ENCODE measurements at regions of chr5 and their contacts with region 1.

Region 1: DNA sequence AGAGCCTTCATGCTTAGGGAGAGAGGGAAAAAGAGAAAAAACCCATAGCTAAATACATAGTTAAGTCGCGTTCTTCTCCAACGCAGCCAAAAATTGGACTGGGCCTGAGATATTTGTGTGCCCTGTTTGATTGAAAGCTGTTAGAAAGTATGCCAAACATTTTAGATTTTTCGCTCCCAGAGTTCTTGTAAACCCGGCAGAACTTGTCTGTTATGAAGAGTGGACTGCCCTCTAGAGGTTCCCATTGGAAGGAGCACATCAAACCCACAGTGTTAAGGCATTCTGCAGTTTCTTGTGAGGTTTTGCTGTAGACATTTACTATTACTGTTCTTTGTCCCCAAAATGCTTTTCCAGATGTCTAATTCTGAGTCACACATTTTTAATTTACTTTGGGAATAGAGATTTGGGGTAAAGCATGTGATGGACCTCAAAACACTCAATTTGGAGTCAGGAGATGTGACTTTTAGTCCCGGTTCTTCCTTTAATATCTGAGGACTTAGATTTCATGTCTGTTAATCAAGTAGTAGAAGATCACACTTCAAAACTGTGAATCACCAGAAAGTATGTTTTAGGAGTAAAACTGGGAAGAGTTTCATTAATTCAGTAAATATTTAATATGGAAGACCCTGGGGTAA is 96.6 kb downstream of the PCSK1 start:
- DNase-seq: peak; percentile 63 to 76
- H3K4me3 ChIP-seq: no peak overlapping the region
- H3K27ac ChIP-seq: peak overlapping the region; percentile 48
- H3K4me1 ChIP-seq: peaks cover 17% of the 10 kb centered on the region
- H3K27me3 ChIP-seq: no peaks in the 10 kb centered on the region
- CTCF ChIP-seq: peak; percentile 89

Region 2: DNA sequence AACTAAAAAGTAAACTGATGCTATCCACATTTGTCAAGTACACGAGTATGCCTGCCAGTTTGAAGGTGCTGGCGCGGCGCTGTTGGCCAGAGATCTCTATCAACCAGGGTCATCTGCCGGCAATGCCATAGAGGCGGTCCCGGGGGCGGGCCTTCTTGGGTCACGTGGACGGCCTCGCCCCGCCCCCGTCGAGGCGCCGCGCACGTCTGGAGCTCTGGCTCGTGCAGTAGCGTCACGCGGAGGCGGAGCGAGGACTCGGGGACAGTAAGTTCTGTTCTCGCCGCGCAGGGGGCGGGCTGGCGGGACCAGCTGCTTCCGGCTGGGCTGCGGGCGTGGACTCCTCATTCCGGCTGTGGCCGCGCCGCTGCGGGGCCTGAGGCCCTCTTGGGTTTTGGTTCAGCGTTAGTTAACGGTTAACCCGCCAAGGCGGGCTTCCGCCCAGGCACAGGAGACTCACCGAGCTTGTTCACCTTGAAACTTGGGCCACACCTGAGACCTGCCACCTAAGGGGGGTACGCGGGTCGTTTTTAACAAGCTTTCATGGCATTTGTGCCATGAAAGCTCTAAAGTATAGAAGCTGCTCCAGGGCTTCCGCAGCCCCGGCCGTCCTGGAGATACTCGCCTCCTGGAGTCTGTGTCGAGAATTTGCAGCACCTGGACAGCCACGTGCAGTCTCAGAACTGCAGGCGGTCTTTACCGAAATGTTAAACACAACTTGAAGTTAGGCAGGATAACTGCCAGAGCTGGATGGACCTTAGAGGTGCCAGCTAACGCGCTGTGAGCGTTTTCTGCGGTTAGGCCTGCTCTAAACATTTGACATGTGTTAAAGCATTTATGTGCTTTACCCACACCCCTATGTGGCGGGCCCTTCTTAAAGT is 689.7 kb before region 1 on chr5 and contains the start of gene RFESD:
- CTCF ChIA-PET with region 1: no interaction called
- POLR2A ChIA-PET with region 1: no interaction called
- intact Hi-C with region 1: loop called (anchors 5 kb)
- DNase-seq: peak; percentile 88 to 93
- H3K4me3 ChIP-seq: peak within 1 kb of the TSS; percentile 89
- H3K27ac ChIP-seq: peak within 1 kb of the TSS; percentile 75
- H3K4me1 ChIP-seq: peaks cover 16% of the 10 kb centered on the region
- H3K27me3 ChIP-seq: no peaks in the 10 kb centered on the region
- CTCF ChIP-seq: peak; percentile 36; the same call in 1 of the 2 replicates
- total RNA-seq, gene RFESD: 4.6 and 5.0 TPM in 2 replicates

Region 3: GRCh38 chr5:95794070-95794516 is 542.4 kb before region 1 on chr5:
- CTCF ChIA-PET with region 1: no interaction called
- POLR2A ChIA-PET with region 1: no interaction called
- intact Hi-C with region 1: no loop called
- DNase-seq: no peak
- H3K4me3 ChIP-seq: no peak overlapping the region
- H3K27ac ChIP-seq: no peak overlapping the region
- H3K4me1 ChIP-seq: no peaks in the 10 kb centered on the region
- H3K27me3 ChIP-seq: no peaks in the 10 kb centered on the region
- CTCF ChIP-seq: no peak

Region 4: GRCh38 chr5:95858661-95859326 is 477.7 kb before region 1 on chr5:
- CTCF ChIA-PET with region 1: no interaction called
- POLR2A ChIA-PET with region 1: no interaction called
- intact Hi-C with region 1: loop called (anchors 1 kb)
- DNase-seq: peak; percentile 89 to 97
- H3K4me3 ChIP-seq: peak overlapping the region; percentile 38
- H3K27ac ChIP-seq: peak overlapping the region; percentile 95
- H3K4me1 ChIP-seq: peaks cover 55% of the 10 kb centered on the region
- H3K27me3 ChIP-seq: no peaks in the 10 kb centered on the region
- CTCF ChIP-seq: peak; percentile 99

Region 5: DNA sequence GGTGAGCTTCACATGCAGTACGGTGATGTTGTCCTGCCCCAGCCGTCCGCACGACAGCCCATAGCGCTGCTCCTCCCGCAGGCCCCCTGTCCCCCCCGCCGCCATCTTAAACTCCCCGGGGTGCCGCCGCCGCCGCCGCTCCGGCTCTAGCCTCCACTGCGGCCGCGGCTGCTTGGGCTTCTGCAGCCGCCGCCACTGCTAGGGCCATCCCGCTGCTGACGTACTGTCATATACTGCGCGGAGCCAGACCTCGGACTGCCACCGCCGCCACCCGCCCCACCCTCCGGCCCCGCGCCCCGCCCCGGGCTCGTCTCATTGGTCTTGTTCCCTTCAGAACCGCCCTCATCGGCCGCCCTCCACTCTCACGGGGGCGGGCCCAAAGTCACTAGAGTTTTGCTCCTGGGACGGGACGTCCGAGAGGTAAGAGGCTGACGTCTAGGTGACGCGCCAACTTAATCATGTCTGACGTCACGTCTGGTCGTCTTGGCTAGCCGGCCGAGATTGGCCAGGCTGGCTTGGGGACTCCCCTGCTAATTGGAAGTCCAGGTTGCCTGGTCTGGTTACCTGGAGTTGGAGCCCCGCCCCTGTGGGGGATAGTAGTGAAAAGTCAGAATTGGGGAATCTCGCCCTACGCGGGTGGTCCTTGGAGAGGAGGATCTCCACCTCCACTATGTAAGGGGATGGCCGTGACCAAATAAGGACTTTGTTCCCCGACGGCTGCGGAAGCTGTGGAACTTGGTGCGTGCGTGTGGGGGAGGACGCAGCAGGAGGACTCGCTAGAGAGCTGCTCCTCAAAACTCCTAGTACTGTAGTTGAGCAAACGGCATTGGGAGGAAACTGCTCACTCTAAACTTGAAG is 374.6 kb before region 1 on chr5 and contains the start of gene ELL2:
- CTCF ChIA-PET with region 1: interaction called, 6 read pairs
- POLR2A ChIA-PET with region 1: no interaction called
- intact Hi-C with region 1: loop called (anchors 1 kb)
- DNase-seq: peak; percentile 98
- H3K4me3 ChIP-seq: peak within 1 kb of the TSS; percentile 65
- H3K27ac ChIP-seq: peak within 1 kb of the TSS; percentile 76
- H3K4me1 ChIP-seq: peaks cover 57% of the 10 kb centered on the region
- H3K27me3 ChIP-seq: no peaks in the 10 kb centered on the region
- CTCF ChIP-seq: no peak
- total RNA-seq, gene ELL2: 25.5 and 27.6 TPM in 2 replicates

Region 6: GRCh38 chr5:96067894-96068614 is 268.4 kb before region 1 on chr5:
- CTCF ChIA-PET with region 1: no interaction called
- POLR2A ChIA-PET with region 1: no interaction called
- intact Hi-C with region 1: loop called (anchors 5 kb)
- DNase-seq: peak; percentile 65 to 88
- H3K4me3 ChIP-seq: peak overlapping the region; percentile 22; the same call in 1 of the 2 replicates
- H3K27ac ChIP-seq: peak overlapping the region; percentile 63
- H3K4me1 ChIP-seq: peaks cover 46% of the 10 kb centered on the region
- H3K27me3 ChIP-seq: no peaks in the 10 kb centered on the region
- CTCF ChIP-seq: no peak

Region 7: DNA sequence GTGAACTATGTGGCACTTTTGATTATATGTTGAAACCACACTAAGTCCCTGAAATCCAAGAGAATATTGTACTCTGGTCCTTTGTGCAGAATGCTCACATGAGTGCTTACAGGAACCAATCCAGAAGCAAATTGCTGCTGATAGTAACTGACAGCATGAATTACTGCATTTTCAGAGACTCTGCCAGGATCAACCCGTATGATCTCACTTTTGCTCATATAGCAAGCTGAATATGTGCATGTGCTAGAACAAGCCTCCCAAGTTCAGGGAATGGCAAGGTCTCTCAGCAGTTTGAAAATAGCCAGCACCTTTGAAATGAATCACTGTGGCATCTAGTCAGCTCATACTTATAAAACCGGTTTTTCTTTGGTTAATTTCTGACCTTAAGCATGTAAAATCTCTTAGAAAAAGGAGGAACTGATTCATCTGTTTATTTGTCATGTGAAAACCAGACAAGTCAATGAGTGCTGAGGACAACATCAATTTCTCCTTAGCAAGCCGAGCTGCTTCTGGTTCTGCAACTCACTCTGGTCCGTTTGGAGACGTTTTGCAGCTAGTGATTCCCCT is 159.1 kb before region 1 on chr5:
- CTCF ChIA-PET with region 1: no interaction called
- POLR2A ChIA-PET with region 1: no interaction called
- intact Hi-C with region 1: loop called (anchors 1 kb)
- DNase-seq: peak; percentile 41 to 97
- H3K4me3 ChIP-seq: peak overlapping the region; percentile 19; the same call in 1 of the 2 replicates
- H3K27ac ChIP-seq: peak overlapping the region; percentile 70
- H3K4me1 ChIP-seq: peaks cover 30% of the 10 kb centered on the region
- H3K27me3 ChIP-seq: no peaks in the 10 kb centered on the region
- CTCF ChIP-seq: no peak

Region 8: DNA sequence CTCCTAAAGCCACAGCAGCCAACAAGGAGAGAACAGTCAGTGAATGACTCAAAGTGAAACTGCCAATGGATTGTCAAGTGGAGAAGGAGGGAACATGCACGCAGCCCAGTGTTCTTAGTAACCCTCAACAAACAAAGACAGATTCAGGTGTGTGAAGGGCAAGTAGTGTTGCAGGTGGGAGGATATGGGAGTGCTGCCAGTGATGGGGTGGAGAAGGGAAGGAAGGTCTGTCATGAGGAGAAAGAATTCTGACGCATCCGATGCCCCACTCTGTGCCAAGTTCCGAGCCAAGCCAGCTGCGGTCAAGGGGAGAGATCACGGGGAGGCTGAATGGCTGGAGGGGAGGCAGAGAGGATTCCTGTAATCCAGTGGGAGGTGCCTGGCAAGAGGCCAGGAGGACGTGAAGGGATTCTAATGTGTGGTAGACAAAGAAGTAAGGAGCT is 382.2 kb after region 1 on chr5:
- CTCF ChIA-PET with region 1: no interaction called
- POLR2A ChIA-PET with region 1: no interaction called
- intact Hi-C with region 1: no loop called
- DNase-seq: peak in 1 of 2 experiments; percentile 51
- H3K4me3 ChIP-seq: no peak overlapping the region
- H3K27ac ChIP-seq: no peak overlapping the region
- H3K4me1 ChIP-seq: peaks cover 20% of the 10 kb centered on the region
- H3K27me3 ChIP-seq: no peaks in the 10 kb centered on the region
- CTCF ChIP-seq: no peak